GM12878 (cell line): ENCODE measurements at regions of chr14 and their contacts with region 1.

Region 1: DNA sequence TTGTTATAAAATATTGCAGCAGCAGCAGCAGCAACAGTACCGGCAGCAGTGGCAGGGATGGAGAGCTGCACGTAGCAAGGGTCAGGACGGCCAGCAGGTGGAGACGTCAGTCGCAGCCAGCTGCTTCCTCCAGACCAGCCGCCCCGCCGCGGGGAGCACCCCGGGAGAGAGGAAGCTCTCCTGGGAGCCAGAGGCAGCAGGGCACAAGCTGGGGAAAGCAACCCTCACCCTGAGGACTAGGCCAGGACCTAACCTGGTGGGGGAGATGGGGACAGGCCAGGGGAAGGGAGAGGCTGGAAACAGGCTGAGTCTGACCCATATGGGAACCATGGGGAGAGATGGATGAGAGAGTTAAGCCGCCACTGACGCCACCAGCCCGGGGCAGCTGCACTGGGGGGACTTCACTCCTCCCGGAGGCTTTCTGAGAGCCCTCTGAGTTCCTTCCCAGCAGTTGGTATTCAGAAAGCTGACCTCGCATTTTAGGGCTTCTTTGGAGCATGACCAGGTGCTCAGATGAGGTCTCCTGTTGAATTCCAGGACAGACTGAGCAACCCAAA is 56.3 kb downstream of the SPTB start:
- DNase-seq: no peak
- ATAC-seq: peak; percentile 98
- H3K4me3 ChIP-seq: no peak overlapping the region
- H3K27ac ChIP-seq: no peak overlapping the region
- H3K4me1 ChIP-seq: no peaks in the 10 kb centered on the region
- H3K27me3 ChIP-seq: peaks cover 0 to 3% of the 10 kb centered on the region in 2 experiments; a peak in 2 of 4 replicates
- CTCF ChIP-seq: peak; percentile 69 to 83 (median 81)
- EP300 ChIP-seq: no peak
- POLR2A ChIP-seq: no peak
- RAD21 ChIP-seq: peak; percentile 61

Region 2: GRCh38 chr14:63852817-63853731 is 970.3 kb before region 1 on chr14 and contains the start of gene SYNE2:
- CTCF ChIA-PET with region 1: no interaction called
- POLR2A ChIA-PET with region 1: no interaction called
- RAD21 ChIA-PET with region 1: no interaction called
- SMC1A ChIA-PET with region 1: no interaction called
- in situ Hi-C with region 1: no loop called
- intact Hi-C with region 1: no loop called
- DNase-seq: no peak
- ATAC-seq: peak; percentile 94
- H3K4me3 ChIP-seq: peak within 1 kb of the TSS; percentile 94
- H3K27ac ChIP-seq: peak within 1 kb of the TSS; percentile 45
- H3K4me1 ChIP-seq: peaks cover 6% of the 10 kb centered on the region; the same call in 1 of the 2 replicates
- H3K27me3 ChIP-seq: no peaks in the 10 kb centered on the region
- CTCF ChIP-seq: peak; percentile 23 to 41 (median 23); a peak in 4 of 6 replicates
- EP300 ChIP-seq: no peak
- POLR2A ChIP-seq: peak; percentile 74
- RAD21 ChIP-seq: peak; percentile 42; the same call in 1 of the 2 replicates
- polyA plus RNA-seq, gene SYNE2: 2.1 to 4.6 TPM

Region 3: GRCh38 chr14:64812217-64812811 is 11.1 kb before region 1 on chr14:
- CTCF ChIA-PET with region 1: interaction called, 17 read pairs
- POLR2A ChIA-PET with region 1: no interaction called
- RAD21 ChIA-PET with region 1: interaction called, 7 read pairs
- SMC1A ChIA-PET with region 1: interaction called, 3 read pairs
- in situ Hi-C with region 1: no loop called
- intact Hi-C with region 1: no loop called
- DNase-seq: no peak
- ATAC-seq: peak; percentile 93
- H3K4me3 ChIP-seq: no peak overlapping the region
- H3K27ac ChIP-seq: no peak overlapping the region
- H3K4me1 ChIP-seq: no peaks in the 10 kb centered on the region
- H3K27me3 ChIP-seq: peaks cover 0 to 3% of the 10 kb centered on the region in 2 experiments; a peak in 2 of 4 replicates
- CTCF ChIP-seq: no peak
- EP300 ChIP-seq: no peak
- POLR2A ChIP-seq: no peak
- RAD21 ChIP-seq: no peak

Region 4: DNA sequence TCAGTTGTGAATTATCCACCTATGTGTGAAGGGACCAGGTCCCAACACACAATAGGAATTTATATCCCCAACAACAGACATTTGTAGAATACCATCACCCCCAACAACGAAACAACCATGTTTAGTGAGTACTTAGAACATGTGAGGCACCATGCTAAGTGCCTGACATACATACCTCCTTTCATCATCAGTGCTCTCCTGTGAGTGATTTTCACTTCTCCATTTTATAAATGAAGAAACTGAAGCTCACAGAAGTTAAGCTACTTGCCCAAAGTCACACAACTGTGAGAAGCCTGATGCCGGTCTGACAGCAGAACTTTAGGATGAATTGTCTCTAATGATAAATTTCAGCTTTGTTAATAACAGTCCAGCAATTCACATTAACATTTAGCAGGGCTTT is 20.9 kb after region 1 on chr14:
- CTCF ChIA-PET with region 1: interaction called, 12 read pairs
- POLR2A ChIA-PET with region 1: no interaction called
- RAD21 ChIA-PET with region 1: interaction called, 5 read pairs
- SMC1A ChIA-PET with region 1: interaction called, 5 read pairs
- in situ Hi-C with region 1: no loop called
- intact Hi-C with region 1: no loop called
- DNase-seq: peak; percentile 35
- ATAC-seq: peak; percentile 92
- H3K4me3 ChIP-seq: no peak overlapping the region
- H3K27ac ChIP-seq: no peak overlapping the region
- H3K4me1 ChIP-seq: peaks cover 9% of the 10 kb centered on the region
- H3K27me3 ChIP-seq: no peaks in the 10 kb centered on the region; a peak in 1 of 4 replicates
- CTCF ChIP-seq: no peak
- EP300 ChIP-seq: no peak
- POLR2A ChIP-seq: no peak
- RAD21 ChIP-seq: no peak

Region 5: GRCh38 chr14:64880221-64881121 is 57.1 kb after region 1 on chr14:
- CTCF ChIA-PET with region 1: interaction called, 22 read pairs
- POLR2A ChIA-PET with region 1: no interaction called
- RAD21 ChIA-PET with region 1: no interaction called
- SMC1A ChIA-PET with region 1: interaction called, 7 read pairs
- in situ Hi-C with region 1: loop called (anchors 5 kb)
- intact Hi-C with region 1: no loop called
- DNase-seq: no peak
- ATAC-seq: peak; percentile 90
- H3K4me3 ChIP-seq: peak overlapping the region; percentile 59; the same call in 1 of the 2 replicates
- H3K27ac ChIP-seq: no peak overlapping the region
- H3K4me1 ChIP-seq: no peaks in the 10 kb centered on the region
- H3K27me3 ChIP-seq: peaks cover 7 to 20% of the 10 kb centered on the region in 2 experiments
- CTCF ChIP-seq: no peak
- EP300 ChIP-seq: no peak
- POLR2A ChIP-seq: no peak
- RAD21 ChIP-seq: no peak

Region 6: GRCh38 chr14:64914237-64914971 is 91.0 kb after region 1 on chr14 and contains the start of gene CHURC1:
- CTCF ChIA-PET with region 1: interaction called, 15 read pairs
- POLR2A ChIA-PET with region 1: no interaction called
- RAD21 ChIA-PET with region 1: interaction called, 8 read pairs
- SMC1A ChIA-PET with region 1: interaction called, 8 read pairs
- in situ Hi-C with region 1: no loop called
- intact Hi-C with region 1: no loop called
- DNase-seq: peak; percentile 93
- ATAC-seq: peak; percentile 98
- H3K4me3 ChIP-seq: peak within 1 kb of the TSS; percentile 79
- H3K27ac ChIP-seq: peak within 1 kb of the TSS; percentile 98
- H3K4me1 ChIP-seq: peaks cover 5% of the 10 kb centered on the region; the same call in 1 of the 2 replicates
- H3K27me3 ChIP-seq: no peaks in the 10 kb centered on the region
- CTCF ChIP-seq: no peak
- EP300 ChIP-seq: no peak
- POLR2A ChIP-seq: peak; percentile 96
- RAD21 ChIP-seq: no peak
- polyA plus RNA-seq, gene CHURC1: 408 to 421 TPM

Region 7: GRCh38 chr14:64947710-64948611 is 124.6 kb after region 1 on chr14:
- CTCF ChIA-PET with region 1: no interaction called
- POLR2A ChIA-PET with region 1: no interaction called
- RAD21 ChIA-PET with region 1: no interaction called
- SMC1A ChIA-PET with region 1: no interaction called
- in situ Hi-C with region 1: no loop called
- intact Hi-C with region 1: no loop called
- DNase-seq: no peak
- ATAC-seq: no peak
- H3K4me3 ChIP-seq: no peak overlapping the region
- H3K27ac ChIP-seq: no peak overlapping the region
- H3K4me1 ChIP-seq: peaks cover 12% of the 10 kb centered on the region
- H3K27me3 ChIP-seq: no peaks in the 10 kb centered on the region
- CTCF ChIP-seq: no peak
- EP300 ChIP-seq: no peak
- POLR2A ChIP-seq: no peak
- RAD21 ChIP-seq: no peak